Endothelial cell of umbilical vein (primary cell): ENCODE measurements at regions of chr3 and their contacts with region 1.

Region 1: DNA sequence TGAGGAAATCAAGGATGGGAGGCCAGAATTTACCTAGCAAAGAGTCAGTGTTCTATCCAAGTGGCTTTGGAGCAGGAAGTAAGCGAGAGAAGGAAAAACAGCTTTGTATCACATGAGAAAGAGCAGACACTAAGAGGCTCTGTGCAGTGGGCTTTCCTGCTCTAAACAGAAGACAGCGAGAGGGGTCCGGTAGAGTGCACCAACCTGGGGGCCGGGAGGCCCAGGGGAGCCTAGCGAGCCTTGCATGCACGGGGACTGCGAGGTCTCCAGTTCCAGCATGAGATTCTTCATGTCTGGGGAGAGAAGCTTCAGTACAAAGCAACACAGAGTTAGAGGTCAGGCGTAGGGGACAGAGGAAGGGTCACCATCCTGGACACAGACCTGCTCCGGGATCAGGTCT is 33.5 kb downstream of the COLQ start:
- DNase-seq: no peak
- H3K4me3 ChIP-seq: no peak overlapping the region
- H3K27ac ChIP-seq: no peak overlapping the region
- H3K4me1 ChIP-seq: no peaks in the 10 kb centered on the region
- H3K27me3 ChIP-seq: peaks cover 3% of the 10 kb centered on the region in 2 experiments
- CTCF ChIP-seq: no peak
- POLR2A ChIP-seq: no peak

Region 2: GRCh38 chr3:15186101-15186476 is 301.9 kb before region 1 on chr3:
- CTCF ChIA-PET with region 1: no interaction called
- POLR2A ChIA-PET with region 1: no interaction called
- dilution Hi-C with region 1: no loop called
- intact Hi-C with region 1: no loop called
- DNase-seq: no peak
- H3K4me3 ChIP-seq: no peak overlapping the region
- H3K27ac ChIP-seq: no peak overlapping the region
- H3K4me1 ChIP-seq: no peaks in the 10 kb centered on the region
- H3K27me3 ChIP-seq: peaks cover 10 to 33% of the 10 kb centered on the region in 2 experiments
- CTCF ChIP-seq: no peak
- POLR2A ChIP-seq: no peak

Region 3: DNA sequence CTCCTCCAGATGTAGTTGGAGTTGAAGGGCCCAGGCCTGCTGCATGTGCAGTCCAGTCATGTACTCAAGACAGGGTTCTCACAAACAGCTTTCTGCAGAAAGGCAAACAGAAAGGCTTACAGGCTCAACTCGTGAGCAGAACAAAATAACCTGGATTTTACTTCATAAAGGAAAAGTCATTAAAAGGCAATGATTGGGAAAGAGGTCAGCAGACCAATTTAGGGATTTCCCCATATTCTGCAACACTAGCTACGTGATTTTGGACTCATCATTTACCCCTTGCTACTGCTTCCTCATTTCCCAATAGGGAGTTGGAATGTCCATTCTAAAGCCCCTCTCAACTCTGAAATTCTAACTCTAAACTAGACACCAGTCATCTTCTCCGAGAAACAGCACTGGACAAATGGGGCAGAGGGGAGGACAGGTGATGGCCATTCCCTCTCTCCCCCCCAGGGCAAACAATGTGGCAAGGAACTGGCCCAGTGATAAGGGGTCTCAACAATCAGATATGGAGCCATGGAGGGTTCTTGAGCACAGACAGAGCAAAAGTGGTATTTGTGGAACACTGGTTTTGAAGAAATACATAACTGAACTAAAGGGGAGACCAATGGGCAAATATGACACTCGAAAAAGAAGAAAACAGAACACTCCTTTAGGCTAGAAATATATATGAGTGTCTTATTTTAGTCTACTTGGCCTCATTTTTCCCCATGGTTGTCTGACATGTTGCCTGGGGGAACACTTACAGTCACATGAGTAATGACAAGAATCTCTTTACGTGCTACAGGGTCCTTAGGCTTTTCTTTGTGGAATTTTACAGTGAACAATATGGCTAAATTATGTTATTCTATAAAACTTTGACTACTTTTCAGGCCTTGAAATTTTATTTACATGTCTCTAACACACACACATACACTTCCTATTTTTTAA is 78.5 kb before region 1 on chr3:
- CTCF ChIA-PET with region 1: no interaction called
- POLR2A ChIA-PET with region 1: no interaction called
- dilution Hi-C with region 1: no loop called
- intact Hi-C with region 1: no loop called
- DNase-seq: no peak
- H3K4me3 ChIP-seq: no peak overlapping the region
- H3K27ac ChIP-seq: no peak overlapping the region
- H3K4me1 ChIP-seq: no peaks in the 10 kb centered on the region
- H3K27me3 ChIP-seq: no peaks in the 10 kb centered on the region
- CTCF ChIP-seq: no peak
- POLR2A ChIP-seq: no peak

Region 4: GRCh38 chr3:15969889-15970640 is 482.1 kb after region 1 on chr3:
- CTCF ChIA-PET with region 1: no interaction called
- POLR2A ChIA-PET with region 1: no interaction called
- dilution Hi-C with region 1: no loop called
- intact Hi-C with region 1: loop called (anchors 2 kb)
- DNase-seq: no peak
- H3K4me3 ChIP-seq: no peak overlapping the region
- H3K27ac ChIP-seq: no peak overlapping the region
- H3K4me1 ChIP-seq: peaks cover 2% of the 10 kb centered on the region
- H3K27me3 ChIP-seq: peaks cover 1 to 2% of the 10 kb centered on the region in 2 experiments
- CTCF ChIP-seq: no peak
- POLR2A ChIP-seq: no peak